ENCODE measurements at regions of chr22 and their contacts with region 1.

Region 1: GRCh38 chr22:32202539-32203180 is 2.2 kb downstream of the RFPL2 start:
- DNase-seq: peak; percentile 64
- H3K4me3 Mint-ChIP-seq: no peak overlapping the region
- H3K27ac Mint-ChIP-seq: no peak overlapping the region
- H3K4me1 Mint-ChIP-seq: peaks cover 6% of the 10 kb centered on the region
- H3K27me3 Mint-ChIP-seq: peaks cover 17% of the 10 kb centered on the region
- CTCF ChIP-seq: peak; percentile 61

Region 2: GRCh38 chr22:32378707-32379272 is 176.1 kb after region 1 on chr22:
- CTCF ChIA-PET with region 1: no interaction called
- POLR2A ChIA-PET with region 1: no interaction called
- intact Hi-C with region 1: loop called (anchors 1 kb)
- DNase-seq: peak; percentile 72
- H3K4me3 Mint-ChIP-seq: no peak overlapping the region
- H3K27ac Mint-ChIP-seq: no peak overlapping the region
- H3K4me1 Mint-ChIP-seq: no peaks in the 10 kb centered on the region
- H3K27me3 Mint-ChIP-seq: peaks cover 29% of the 10 kb centered on the region
- CTCF ChIP-seq: peak; percentile 71

Region 3: GRCh38 chr22:32474635-32475467 is 272.2 kb after region 1 on chr22 and contains the start of gene FBXO7:
- CTCF ChIA-PET with region 1: interaction called, 11 read pairs
- POLR2A ChIA-PET with region 1: no interaction called
- intact Hi-C with region 1: no loop called
- DNase-seq: peak; percentile 89
- H3K4me3 Mint-ChIP-seq: peak within 1 kb of the TSS; percentile 98
- H3K27ac Mint-ChIP-seq: peak within 1 kb of the TSS; percentile 96
- H3K4me1 Mint-ChIP-seq: peaks cover 12% of the 10 kb centered on the region
- H3K27me3 Mint-ChIP-seq: no peaks in the 10 kb centered on the region
- CTCF ChIP-seq: peak; percentile 13
- total RNA-seq, gene FBXO7: 59.8 and 76.9 TPM in 2 replicates

Measured in MCF 10A (cell line).